ENCODE measurements at regions of chr13 and their contacts with region 1.

Region 1: GRCh38 chr13:45511310-45512097 is 46.8 kb downstream of the COG3 start:
- DNase-seq: peak; percentile 73
- ATAC-seq: peak; percentile 65
- H3K4me3 ChIP-seq: no peak overlapping the region
- H3K4me3 Mint-ChIP-seq: no peak overlapping the region
- H3K27ac ChIP-seq: peak overlapping the region in 1 of 2 donors; percentile 26
- H3K27ac Mint-ChIP-seq: no peak overlapping the region
- H3K4me1 ChIP-seq: peaks cover 0 to 3% of the 10 kb centered on the region in 2 donors
- H3K4me1 Mint-ChIP-seq: peaks cover 8% of the 10 kb centered on the region
- H3K27me3 ChIP-seq: no peaks in the 10 kb centered on the region
- H3K27me3 Mint-ChIP-seq: no peaks in the 10 kb centered on the region
- CTCF ChIP-seq: peak; percentile 95

Region 2: GRCh38 chr13:46321494-46322225 is 810.2 kb after region 1 on chr13:
- CTCF ChIA-PET with region 1: interaction called, 4 read pairs
- POLR2A ChIA-PET with region 1: no interaction called
- intact Hi-C with region 1: loop called (anchors 1 kb)
- DNase-seq: peak; percentile 73
- ATAC-seq: peak; percentile 79
- H3K4me3 ChIP-seq: peak overlapping the region in 2 of 5 experiments; percentile 5 to 13
- H3K4me3 Mint-ChIP-seq: no peak overlapping the region
- H3K27ac ChIP-seq: no peak overlapping the region
- H3K27ac Mint-ChIP-seq: no peak overlapping the region
- H3K4me1 ChIP-seq: peaks cover 0 to 9% of the 10 kb centered on the region in 2 donors
- H3K4me1 Mint-ChIP-seq: peaks cover 13% of the 10 kb centered on the region
- H3K27me3 ChIP-seq: no peaks in the 10 kb centered on the region
- H3K27me3 Mint-ChIP-seq: no peaks in the 10 kb centered on the region
- CTCF ChIP-seq: peak; percentile 87